Calu3 (cell line): ENCODE measurements at regions of chr5 and their contacts with region 1.

Region 1: DNA sequence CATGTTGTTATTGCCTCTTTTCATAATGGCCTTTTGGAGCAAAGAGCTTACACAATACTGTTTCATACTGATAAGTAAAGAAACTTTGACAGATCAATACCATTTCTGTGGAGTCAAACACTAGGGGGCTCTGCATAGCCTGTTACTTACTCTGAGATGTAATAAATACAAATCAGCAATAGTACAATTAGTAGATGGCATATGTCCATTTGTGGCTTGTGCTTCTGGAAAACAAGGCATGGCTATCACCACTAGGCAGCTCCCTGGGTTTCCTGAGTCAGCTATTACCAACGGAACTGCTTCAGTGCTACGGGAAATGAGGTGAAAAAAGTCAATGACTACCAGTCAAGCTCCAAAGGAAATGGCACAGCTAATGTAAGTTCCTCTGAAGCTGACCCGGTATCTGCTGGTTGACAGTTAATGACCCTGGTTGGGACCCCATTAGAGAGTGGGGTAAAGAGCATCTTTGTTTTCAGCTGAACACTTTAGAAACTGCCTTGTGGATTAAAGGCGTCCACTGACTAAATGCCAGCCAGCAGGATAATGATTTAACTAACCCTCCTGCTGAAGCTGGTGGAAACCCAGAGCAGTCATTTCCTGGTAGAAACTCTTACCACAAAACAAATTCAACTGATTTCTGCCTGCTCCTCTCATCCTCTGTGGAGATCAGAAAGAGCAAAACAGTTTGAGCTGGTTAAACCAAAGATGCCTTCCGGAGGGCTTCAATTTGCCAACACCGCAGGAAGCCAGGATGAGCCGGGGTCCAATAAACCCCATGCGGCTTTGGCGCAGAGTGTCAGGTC is 69.0 kb upstream of the FAM169A start:
- DNase-seq: peak; percentile 63
- H3K4me3 Mint-ChIP-seq: peak overlapping the region; percentile 41
- H3K27ac Mint-ChIP-seq: peak overlapping the region; percentile 23
- H3K4me1 Mint-ChIP-seq: peaks cover 43% of the 10 kb centered on the region
- H3K27me3 Mint-ChIP-seq: no peaks in the 10 kb centered on the region
- CTCF ChIP-seq: peak; percentile 63

Region 2: GRCh38 chr5:74945561-74946165 is 10.5 kb after region 1 on chr5:
- CTCF ChIA-PET with region 1: interaction called, 14 read pairs
- intact Hi-C with region 1: loop called (anchors 1 kb)
- DNase-seq: no peak
- H3K4me3 Mint-ChIP-seq: no peak overlapping the region
- H3K27ac Mint-ChIP-seq: peak overlapping the region; percentile 10
- H3K4me1 Mint-ChIP-seq: peaks cover 60% of the 10 kb centered on the region
- H3K27me3 Mint-ChIP-seq: no peaks in the 10 kb centered on the region
- CTCF ChIP-seq: no peak

Region 3: DNA sequence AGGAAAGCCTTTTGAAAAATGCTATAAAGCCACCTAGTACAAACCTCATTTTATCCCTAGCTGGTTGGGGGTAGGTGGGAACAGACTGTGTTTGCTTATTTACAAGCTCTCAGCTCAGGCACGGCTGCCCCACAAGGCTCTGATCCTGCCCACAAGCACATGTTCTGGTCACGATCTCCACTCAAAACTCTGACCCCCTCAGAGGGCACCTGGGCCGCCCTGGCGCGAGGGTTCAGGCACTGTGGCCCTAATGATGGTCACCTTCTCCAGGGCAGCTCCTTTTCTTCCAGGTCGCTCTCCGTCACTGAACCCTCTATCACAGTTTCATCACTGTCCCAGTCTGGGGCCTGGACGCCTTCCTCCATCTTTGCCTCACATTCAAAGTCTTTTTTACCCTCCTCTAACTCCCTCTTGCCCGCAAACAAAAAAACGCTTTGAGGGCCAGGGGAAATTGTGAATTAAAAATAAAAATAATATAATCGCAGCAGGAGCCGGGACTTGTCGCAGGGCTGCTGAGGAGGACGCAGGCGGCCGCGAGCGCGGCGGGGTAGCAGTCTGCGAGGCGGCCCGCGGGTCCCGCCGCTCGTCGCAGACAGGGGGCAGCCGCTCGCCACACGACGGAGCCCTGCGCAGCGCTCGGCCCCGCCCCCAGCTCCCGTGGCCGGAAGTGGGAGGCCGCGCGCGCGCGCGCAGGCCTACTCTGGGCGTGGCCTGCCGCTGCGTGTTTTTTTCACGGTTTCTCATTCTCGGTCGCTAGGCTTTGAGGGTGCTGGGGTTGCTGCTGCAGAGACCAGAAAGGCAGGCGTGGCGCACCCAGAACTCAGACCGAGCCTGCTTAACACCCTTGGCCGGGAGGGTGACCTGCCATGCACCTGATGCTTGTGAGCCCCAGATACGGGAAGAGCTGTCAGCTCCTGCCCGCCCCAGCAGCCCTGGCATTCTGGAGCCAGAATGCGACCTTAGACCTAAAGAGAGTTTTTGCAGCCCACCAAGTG is 301.5 kb after region 1 on chr5 and contains the start of gene ANKRD31:
- CTCF ChIA-PET with region 1: interaction called, 8 read pairs
- intact Hi-C with region 1: loop called (anchors 10 kb)
- DNase-seq: peak; percentile 94
- H3K4me3 Mint-ChIP-seq: peak within 1 kb of the TSS; percentile 69
- H3K27ac Mint-ChIP-seq: peak within 1 kb of the TSS; percentile 81
- H3K4me1 Mint-ChIP-seq: peaks cover 30% of the 10 kb centered on the region
- H3K27me3 Mint-ChIP-seq: no peaks in the 10 kb centered on the region
- CTCF ChIP-seq: peak; percentile 85
- total RNA-seq, gene ANKRD31: 1.5 and 1.7 TPM in 2 replicates